A549 (cell line): ENCODE measurements at regions of chr17 and their contacts with region 1.

Region 1: GRCh38 chr17:76623271-76624146 is 20.0 kb downstream of the ST6GALNAC1 start:
- DNase-seq: peak; percentile 74 to 91
- ATAC-seq: peak; percentile 85 to 96
- H3K4me3 ChIP-seq: peak overlapping the region; percentile 3; the same call in 1 of the 3 replicates
- H3K27ac ChIP-seq: peak overlapping the region; percentile 59 to 77; a peak in 5 of 6 replicates
- H3K4me1 ChIP-seq: peaks cover 11% of the 10 kb centered on the region
- CTCF ChIP-seq: peak; percentile 98
- EP300 ChIP-seq: no peak
- POLR2A ChIP-seq: no peak
- RAD21 ChIP-seq: peak; percentile 83 to 90

Region 2: GRCh38 chr17:76506408-76507349 is 116.8 kb before region 1 on chr17:
- CTCF ChIA-PET with region 1: interaction called, 15 read pairs
- POLR2A ChIA-PET with region 1: no interaction called
- DNase-seq: peak; percentile 71 to 95
- ATAC-seq: peak; percentile 80 to 90
- H3K4me3 ChIP-seq: no peak overlapping the region
- H3K27ac ChIP-seq: peak overlapping the region; percentile 52 to 73; a peak in 5 of 6 replicates
- H3K4me1 ChIP-seq: peaks cover 9% of the 10 kb centered on the region
- CTCF ChIP-seq: peak; percentile 98
- EP300 ChIP-seq: no peak
- POLR2A ChIP-seq: no peak
- RAD21 ChIP-seq: peak; percentile 99

Region 3: GRCh38 chr17:76540381-76541300 is 82.9 kb before region 1 on chr17:
- CTCF ChIA-PET with region 1: interaction called, 25 read pairs
- POLR2A ChIA-PET with region 1: no interaction called
- DNase-seq: peak; percentile 94 to 100
- ATAC-seq: peak; percentile 93 to 99
- H3K4me3 ChIP-seq: peak overlapping the region; percentile 30
- H3K27ac ChIP-seq: peak overlapping the region; percentile 79 to 86
- H3K4me1 ChIP-seq: peaks cover 13% of the 10 kb centered on the region
- CTCF ChIP-seq: no peak
- EP300 ChIP-seq: no peak
- POLR2A ChIP-seq: peak; percentile 84
- RAD21 ChIP-seq: no peak

Region 4: GRCh38 chr17:76567634-76568432 is 55.7 kb before region 1 on chr17:
- CTCF ChIA-PET with region 1: interaction called, 105 read pairs
- POLR2A ChIA-PET with region 1: interaction called, 9 read pairs
- DNase-seq: no peak
- ATAC-seq: peak; percentile 30 to 46
- H3K4me3 ChIP-seq: no peak overlapping the region
- H3K27ac ChIP-seq: peak overlapping the region in 1 of 2 experiments; percentile 23; a peak in 2 of 6 replicates
- H3K4me1 ChIP-seq: peaks cover 34% of the 10 kb centered on the region; the same call in 2 of the 3 replicates
- CTCF ChIP-seq: no peak
- EP300 ChIP-seq: no peak
- POLR2A ChIP-seq: no peak
- RAD21 ChIP-seq: no peak

Region 5: DNA sequence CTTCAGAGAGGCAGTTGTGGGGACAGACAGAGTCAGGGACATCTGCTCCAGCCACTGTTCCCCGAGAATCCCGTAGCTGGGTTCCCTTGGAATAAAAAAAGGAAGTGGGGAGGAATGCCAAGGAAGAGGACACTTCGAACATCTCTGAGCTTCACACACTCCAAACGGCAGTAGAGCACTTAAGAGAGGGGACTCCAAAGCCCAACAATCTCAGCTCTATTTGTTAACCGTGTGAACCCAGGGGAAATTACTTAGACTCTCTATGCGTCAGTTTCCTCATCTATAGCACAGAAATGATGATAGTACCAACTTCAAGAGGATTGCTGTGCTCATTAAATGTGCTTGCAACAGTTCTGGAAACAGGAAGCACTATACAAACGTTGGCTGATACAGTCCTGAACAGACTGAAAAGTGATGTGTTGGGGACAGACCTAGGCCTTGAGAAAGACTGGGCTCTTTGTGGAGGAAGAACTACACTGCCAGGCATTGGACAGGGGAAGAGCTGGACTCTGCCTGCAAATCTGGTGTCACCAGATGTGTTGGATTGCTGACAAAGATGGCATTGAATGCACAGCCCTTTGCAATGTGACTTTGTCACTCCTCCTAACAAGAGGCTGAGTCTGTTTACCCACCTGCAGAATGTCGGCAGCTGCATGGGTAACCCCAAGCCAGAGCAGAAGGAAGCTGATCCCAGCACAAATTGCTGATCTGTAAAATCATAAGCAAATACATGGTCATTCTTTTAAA is 25.6 kb before region 1 on chr17:
- CTCF ChIA-PET with region 1: interaction called, 27 read pairs
- POLR2A ChIA-PET with region 1: interaction called, 3 read pairs
- DNase-seq: no peak
- ATAC-seq: peak; percentile 29 to 36; a peak in 4 of 6 replicates
- H3K4me3 ChIP-seq: no peak overlapping the region
- H3K27ac ChIP-seq: no peak overlapping the region
- H3K4me1 ChIP-seq: peaks cover 8% of the 10 kb centered on the region; the same call in 2 of the 3 replicates
- CTCF ChIP-seq: no peak
- EP300 ChIP-seq: no peak
- POLR2A ChIP-seq: no peak
- RAD21 ChIP-seq: no peak

Region 6: DNA sequence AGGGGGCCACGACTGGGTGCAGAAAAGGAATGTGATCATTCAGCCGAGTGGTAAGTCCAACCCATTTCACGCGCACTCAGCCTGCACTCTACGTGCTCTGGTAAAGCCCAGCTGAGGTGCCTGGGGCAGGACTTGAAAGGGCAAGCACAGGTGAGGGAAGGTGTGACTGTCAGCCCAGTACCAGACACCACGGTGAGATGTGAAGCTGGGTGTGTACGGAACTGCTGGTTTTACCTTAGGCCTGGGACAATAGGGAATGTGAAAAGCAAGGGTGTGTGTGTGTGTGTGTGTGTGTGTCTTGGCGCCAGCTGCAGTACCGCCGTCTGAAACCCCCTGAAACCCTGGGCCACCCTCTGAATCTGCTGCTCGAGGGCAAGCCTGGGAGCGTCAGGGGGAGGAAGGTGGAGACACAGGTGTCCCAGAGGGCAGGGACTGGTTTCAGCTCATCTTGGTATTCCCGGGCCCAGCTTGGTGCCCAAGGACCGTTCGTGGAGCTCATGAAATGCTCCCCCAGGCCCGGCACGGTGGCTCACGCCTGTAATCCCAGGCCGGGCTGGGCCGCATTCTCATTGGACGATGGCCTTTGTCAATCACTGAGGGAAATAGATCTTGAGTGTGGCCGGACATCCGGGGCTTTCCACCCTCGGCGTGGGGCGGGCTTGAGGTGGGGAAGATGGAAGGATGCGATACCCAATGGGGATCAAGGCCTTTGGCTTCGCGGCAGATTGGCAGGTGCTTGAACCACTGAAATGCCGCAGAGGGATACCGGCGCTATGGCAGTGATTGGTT is 47.8 kb after region 1 on chr17:
- CTCF ChIA-PET with region 1: interaction called, 11 read pairs
- POLR2A ChIA-PET with region 1: interaction called, 12 read pairs
- DNase-seq: peak; percentile 100
- ATAC-seq: peak; percentile 97 to 99
- H3K4me3 ChIP-seq: peak overlapping the region; percentile 54
- H3K27ac ChIP-seq: peak overlapping the region; percentile 85 to 91
- H3K4me1 ChIP-seq: peaks cover 15% of the 10 kb centered on the region
- CTCF ChIP-seq: no peak
- EP300 ChIP-seq: no peak
- POLR2A ChIP-seq: peak; percentile 66
- RAD21 ChIP-seq: no peak

Region 7: GRCh38 chr17:76726231-76726775 is 102.8 kb after region 1 on chr17 and contains the start of gene JMJD6:
- CTCF ChIA-PET with region 1: no interaction called
- POLR2A ChIA-PET with region 1: no interaction called
- DNase-seq: peak; percentile 98 to 99
- ATAC-seq: peak; percentile 84 to 91
- H3K4me3 ChIP-seq: peak within 1 kb of the TSS; percentile 97
- H3K27ac ChIP-seq: peak within 1 kb of the TSS; percentile 93 to 99
- H3K4me1 ChIP-seq: peaks cover 17% of the 10 kb centered on the region
- CTCF ChIP-seq: no peak
- EP300 ChIP-seq: no peak
- POLR2A ChIP-seq: peak; percentile 90
- RAD21 ChIP-seq: no peak
- polyA plus RNA-seq, gene JMJD6: 17.5 and 23.0 TPM in 2 replicates

Region 8: DNA sequence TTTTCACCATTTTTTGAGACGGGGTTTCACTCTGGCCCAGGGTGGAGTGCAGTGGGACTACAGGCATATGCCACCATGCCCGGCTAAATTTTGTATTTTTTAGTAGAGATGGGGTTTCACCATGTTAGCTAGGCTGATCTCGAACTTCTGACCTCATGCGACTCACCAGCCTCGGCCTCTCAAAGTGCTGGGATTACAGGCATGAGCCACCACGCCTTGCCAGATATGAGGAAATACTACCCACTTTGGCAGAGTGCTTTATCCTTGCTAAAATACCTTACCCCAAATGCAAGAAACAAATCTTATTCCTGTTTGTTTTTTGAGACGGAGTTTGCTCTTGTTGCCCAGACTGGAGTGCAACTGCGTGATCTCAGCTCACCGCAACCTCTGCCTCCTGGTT is 181.8 kb after region 1 on chr17:
- CTCF ChIA-PET with region 1: no interaction called
- POLR2A ChIA-PET with region 1: no interaction called
- DNase-seq: peak in 1 of 2 experiments; percentile 47
- ATAC-seq: peak in 1 of 2 experiments; percentile 42; a peak in 1 of 6 replicates
- H3K4me3 ChIP-seq: no peak overlapping the region
- H3K27ac ChIP-seq: peak overlapping the region in 1 of 2 experiments; percentile 33; a peak in 1 of 6 replicates
- H3K4me1 ChIP-seq: peaks cover 8% of the 10 kb centered on the region; the same call in 2 of the 3 replicates
- CTCF ChIP-seq: no peak
- EP300 ChIP-seq: no peak
- POLR2A ChIP-seq: no peak
- RAD21 ChIP-seq: no peak